GM18951 (cell line): ENCODE measurements at regions of chr6 and their contacts with region 1.

Region 1: DNA sequence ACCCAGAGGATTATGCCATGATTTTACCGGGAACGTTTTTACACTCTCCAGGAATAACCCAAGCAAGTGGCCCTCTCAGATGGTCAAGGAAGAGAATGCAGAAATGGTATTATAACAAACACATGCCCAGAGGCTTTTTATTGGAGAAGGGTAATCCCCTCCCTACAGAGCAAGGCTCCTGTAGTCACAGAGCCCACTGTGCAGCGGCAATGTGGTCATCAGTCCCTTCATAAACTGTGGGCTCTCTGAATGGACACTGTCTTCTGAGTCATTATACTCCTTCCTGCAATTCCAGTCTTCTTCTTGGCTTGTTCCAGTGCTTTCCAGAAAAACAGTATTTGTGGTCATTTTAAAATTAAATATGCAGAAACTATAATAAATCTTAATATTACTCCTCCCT is 74.7 kb downstream of the LAMA4 start:
- POLR2A ChIP-seq: no peak

Region 2: GRCh38 chr6:112311950-112312547 is 132.4 kb after region 1 on chr6:
- in situ Hi-C with region 1: loop called (anchors 10 kb)
- POLR2A ChIP-seq: no peak

Region 3: GRCh38 chr6:113805173-113805790 is 1625.7 kb after region 1 on chr6:
- in situ Hi-C with region 1: no loop called
- POLR2A ChIP-seq: no peak